Prostate gland (tissue), 2 donors: ENCODE measurements at regions of chr5 and their contacts with region 1.

Region 1: DNA sequence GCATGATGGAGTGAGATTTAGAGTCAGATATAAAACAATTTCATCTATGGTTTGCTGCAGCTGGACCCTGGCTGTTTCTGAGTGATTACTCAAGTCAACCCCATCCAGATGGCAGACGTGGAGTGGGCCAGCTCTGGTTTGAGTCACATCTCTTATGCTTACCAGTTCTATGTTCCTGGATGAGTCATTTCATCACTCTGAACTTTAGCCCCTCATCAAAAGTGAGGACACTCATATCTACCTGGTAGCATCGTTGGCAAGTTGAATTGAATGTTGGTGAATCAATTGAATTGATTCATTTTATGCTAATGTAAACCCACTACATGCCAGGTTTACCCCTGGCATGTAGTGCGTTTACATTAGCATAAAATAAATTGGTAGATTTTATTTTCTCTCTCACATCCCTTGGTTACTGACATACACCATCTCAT is 176.4 kb downstream of the FGF18 start:
- DNase-seq: no peak
- H3K4me3 ChIP-seq: no peak overlapping the region
- H3K27ac ChIP-seq: no peak overlapping the region
- H3K4me1 ChIP-seq: no peaks in the 10 kb centered on the region
- H3K27me3 ChIP-seq: no peaks in the 10 kb centered on the region
- CTCF ChIP-seq: no peak
- POLR2A ChIP-seq: no peak

Region 2: GRCh38 chr5:170896779-170897178 is 699.0 kb before region 1 on chr5:
- intact Hi-C with region 1: no loop called
- DNase-seq: no peak
- H3K4me3 ChIP-seq: no peak overlapping the region
- H3K27ac ChIP-seq: no peak overlapping the region
- H3K4me1 ChIP-seq: no peaks in the 10 kb centered on the region
- H3K27me3 ChIP-seq: no peaks in the 10 kb centered on the region
- CTCF ChIP-seq: no peak
- POLR2A ChIP-seq: no peak

Region 3: GRCh38 chr5:171387345-171387969 is 208.4 kb before region 1 on chr5 and contains the start of gene NPM1:
- intact Hi-C with region 1: no loop called
- DNase-seq: peak; percentile 97
- H3K4me3 ChIP-seq: peak within 1 kb of the TSS; percentile 75 to 81
- H3K27ac ChIP-seq: peak within 1 kb of the TSS; percentile 85 to 93
- H3K4me1 ChIP-seq: peaks cover 11% of the 10 kb centered on the region
- H3K27me3 ChIP-seq: no peaks in the 10 kb centered on the region
- CTCF ChIP-seq: peak in 1 of 4 experiments; percentile 12
- POLR2A ChIP-seq: peak; percentile 84
- total RNA-seq, gene NPM1: 397 to 544 TPM

Region 4: DNA sequence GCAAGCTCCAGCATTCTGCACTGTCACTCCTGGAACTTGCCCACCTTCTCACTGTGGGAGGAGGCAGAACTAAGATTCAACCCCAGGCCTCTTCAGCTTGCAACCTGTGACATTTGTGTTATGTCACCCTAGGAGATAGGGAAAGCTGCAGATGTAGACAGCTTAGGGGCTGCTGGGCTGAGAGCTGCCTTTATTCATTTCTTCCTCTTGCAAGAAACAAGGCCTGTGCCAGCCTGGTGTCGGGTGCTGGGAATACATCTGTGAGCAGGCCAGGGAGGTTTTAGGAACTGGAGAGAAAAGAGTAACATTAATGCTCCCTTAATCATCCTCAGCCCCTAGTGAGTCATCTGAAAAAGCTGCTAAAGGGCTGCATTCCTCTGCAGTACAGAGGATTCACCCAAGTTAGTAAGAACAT is 74.6 kb before region 1 on chr5:
- intact Hi-C with region 1: loop called (anchors 10 kb)
- DNase-seq: no peak
- H3K4me3 ChIP-seq: no peak overlapping the region
- H3K27ac ChIP-seq: peak overlapping the region; percentile 33 to 58
- H3K4me1 ChIP-seq: no peaks in the 10 kb centered on the region
- H3K27me3 ChIP-seq: peaks cover 3% of the 10 kb centered on the region
- CTCF ChIP-seq: no peak
- POLR2A ChIP-seq: no peak

Region 5: GRCh38 chr5:171537070-171537849 is 58.6 kb before region 1 on chr5:
- intact Hi-C with region 1: no loop called
- DNase-seq: no peak
- H3K4me3 ChIP-seq: no peak overlapping the region
- H3K27ac ChIP-seq: no peak overlapping the region
- H3K4me1 ChIP-seq: no peaks in the 10 kb centered on the region
- H3K27me3 ChIP-seq: no peaks in the 10 kb centered on the region
- CTCF ChIP-seq: no peak
- POLR2A ChIP-seq: no peak

Region 6: GRCh38 chr5:172616730-172617129 is 1020.9 kb after region 1 on chr5:
- intact Hi-C with region 1: no loop called
- DNase-seq: no peak
- H3K4me3 ChIP-seq: no peak overlapping the region
- H3K27ac ChIP-seq: peak overlapping the region in 1 of 2 donors; percentile 19
- H3K4me1 ChIP-seq: no peaks in the 10 kb centered on the region
- H3K27me3 ChIP-seq: no peaks in the 10 kb centered on the region
- CTCF ChIP-seq: no peak
- POLR2A ChIP-seq: no peak